A549 (cell line): ENCODE measurements at regions of chr12 and their contacts with region 1.

Region 1: GRCh38 chr12:53098982-53099651 is 1.6 kb downstream of the IGFBP6 start:
- DNase-seq: peak; percentile 95 to 98
- ATAC-seq: peak; percentile 71 to 75
- H3K4me3 ChIP-seq: peak overlapping the region; percentile 54
- H3K27ac ChIP-seq: peak overlapping the region; percentile 92 to 95
- H3K4me1 ChIP-seq: peaks cover 50% of the 10 kb centered on the region
- CTCF ChIP-seq: peak; percentile 98
- EP300 ChIP-seq: no peak
- POLR2A ChIP-seq: peak; percentile 30
- RAD21 ChIP-seq: peak; percentile 95 to 96

Region 2: GRCh38 chr12:53079226-53080117 is 19.6 kb before region 1 on chr12 and contains the start of gene SPRYD3:
- CTCF ChIA-PET with region 1: interaction called, 1,424 read pairs
- POLR2A ChIA-PET with region 1: interaction called, 46 read pairs
- DNase-seq: peak; percentile 99 to 100
- ATAC-seq: peak; percentile 98 to 99
- H3K4me3 ChIP-seq: peak within 1 kb of the TSS; percentile 56
- H3K27ac ChIP-seq: peak within 1 kb of the TSS; percentile 86 to 94
- H3K4me1 ChIP-seq: peaks cover 10% of the 10 kb centered on the region; the same call in 2 of the 3 replicates
- CTCF ChIP-seq: no peak
- EP300 ChIP-seq: no peak
- POLR2A ChIP-seq: peak; percentile 99
- RAD21 ChIP-seq: no peak
- polyA plus RNA-seq, gene SPRYD3: 26.8 and 28.1 TPM in 2 replicates

Region 3: GRCh38 chr12:53115112-53115890 is 16.2 kb after region 1 on chr12:
- CTCF ChIA-PET with region 1: interaction called, 24 read pairs
- POLR2A ChIA-PET with region 1: no interaction called
- DNase-seq: no peak
- ATAC-seq: peak in 1 of 2 experiments; percentile 16; a peak in 2 of 6 replicates
- H3K4me3 ChIP-seq: no peak overlapping the region
- H3K27ac ChIP-seq: no peak overlapping the region
- H3K4me1 ChIP-seq: no peaks in the 10 kb centered on the region
- CTCF ChIP-seq: no peak
- EP300 ChIP-seq: no peak
- POLR2A ChIP-seq: no peak
- RAD21 ChIP-seq: no peak

Region 4: GRCh38 chr12:53129170-53129569 is 30.1 kb after region 1 on chr12:
- CTCF ChIA-PET with region 1: interaction called, 11 read pairs
- POLR2A ChIA-PET with region 1: no interaction called
- DNase-seq: no peak
- ATAC-seq: peak; percentile 39 to 50; a peak in 4 of 6 replicates
- H3K4me3 ChIP-seq: no peak overlapping the region
- H3K27ac ChIP-seq: no peak overlapping the region
- H3K4me1 ChIP-seq: no peaks in the 10 kb centered on the region
- CTCF ChIP-seq: no peak
- EP300 ChIP-seq: no peak
- POLR2A ChIP-seq: no peak
- RAD21 ChIP-seq: no peak

Region 5: DNA sequence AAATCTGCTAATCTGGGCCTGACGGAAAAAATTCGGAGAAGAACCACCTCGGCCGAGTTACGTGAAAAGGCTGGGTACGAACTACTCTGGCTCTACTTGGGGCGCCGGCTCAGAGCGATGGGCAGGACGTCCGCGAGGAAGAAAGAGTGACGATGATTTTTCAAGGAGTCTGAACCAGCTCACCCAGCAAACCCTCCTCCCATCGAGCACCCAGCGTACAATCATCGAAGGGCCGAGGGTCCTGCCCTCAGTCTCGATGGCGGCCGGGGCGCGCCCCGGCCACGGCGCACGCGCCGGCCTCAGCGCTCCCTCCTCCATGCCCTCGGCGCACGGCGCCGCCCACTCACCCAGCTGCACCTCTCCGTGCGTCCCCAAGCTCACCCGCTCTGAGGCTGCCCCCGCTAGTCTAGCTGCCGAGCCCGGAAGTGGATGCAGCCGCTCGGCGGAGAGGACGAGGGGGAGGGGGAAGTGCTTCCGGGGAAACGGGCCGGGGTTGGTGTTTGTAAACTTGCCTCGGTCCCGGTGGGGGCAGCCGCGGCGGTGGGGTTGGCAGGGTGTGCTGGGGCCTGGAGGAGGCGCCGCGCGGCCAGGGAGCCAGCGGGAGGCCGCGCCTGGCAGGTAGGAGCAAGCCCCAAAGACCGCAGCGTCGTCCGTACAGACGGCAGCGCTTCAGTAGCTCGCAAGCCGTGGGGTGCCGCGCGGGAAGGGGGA is 81.3 kb after region 1 on chr12 and contains the starts of genes CSAD and ZNF740:
- CTCF ChIA-PET with region 1: interaction called, 5 read pairs
- POLR2A ChIA-PET with region 1: interaction called, 11 read pairs
- DNase-seq: peak; percentile 98 to 99
- ATAC-seq: peak; percentile 97 to 98
- H3K4me3 ChIP-seq: peak within 1 kb of the TSS; percentile 76
- H3K27ac ChIP-seq: peak within 1 kb of the TSS; percentile 92 to 93
- H3K4me1 ChIP-seq: peaks cover 39% of the 10 kb centered on the region
- CTCF ChIP-seq: no peak
- EP300 ChIP-seq: no peak; a peak in 1 of 5 replicates
- POLR2A ChIP-seq: peak; percentile 90
- RAD21 ChIP-seq: 0 out of 5 replicates have a peak, but pooled peaks of 1 of the 2 experiments have one; percentile 14
- polyA plus RNA-seq, gene CSAD: 16.5 and 19.2 TPM in 2 replicates
- polyA plus RNA-seq, gene ZNF740: 28.8 and 32.9 TPM in 2 replicates

Region 6: DNA sequence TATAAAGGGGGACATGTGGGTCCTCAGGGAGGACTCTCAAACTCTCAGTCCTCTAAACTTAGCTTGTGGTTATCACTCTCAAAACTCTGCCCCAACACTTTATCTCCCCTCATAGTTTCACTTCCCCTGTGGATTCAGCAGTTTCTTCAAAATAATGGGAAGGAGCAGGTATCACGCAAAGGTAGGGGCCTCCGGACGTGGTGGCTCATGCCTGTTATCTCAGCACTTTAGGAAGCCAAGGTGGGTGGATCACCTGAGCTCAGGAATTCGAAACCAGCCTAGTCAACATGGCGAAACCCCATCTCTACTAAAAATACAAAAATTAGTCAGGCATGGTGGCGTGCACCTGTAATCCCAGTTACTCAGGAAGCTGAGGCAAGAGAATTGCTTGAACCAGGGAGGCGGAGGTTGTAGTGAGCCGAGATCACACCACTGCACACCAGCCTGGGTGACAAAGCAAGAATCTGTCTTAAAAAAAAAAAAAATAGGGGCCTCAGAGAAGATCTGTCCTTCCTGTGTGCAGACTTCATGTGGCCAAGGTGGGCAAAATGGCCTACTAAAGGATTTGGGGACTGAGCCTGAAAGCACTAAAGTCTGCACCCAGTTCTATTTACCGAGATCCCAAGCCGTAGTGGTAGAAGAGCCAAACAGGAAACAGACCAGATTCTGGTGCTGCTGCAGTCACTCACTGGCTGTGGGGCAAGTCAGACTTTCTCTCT is 101.5 kb after region 1 on chr12:
- CTCF ChIA-PET with region 1: interaction called, 32 read pairs
- POLR2A ChIA-PET with region 1: no interaction called
- DNase-seq: no peak
- ATAC-seq: no peak
- H3K4me3 ChIP-seq: no peak overlapping the region
- H3K27ac ChIP-seq: no peak overlapping the region
- H3K4me1 ChIP-seq: peaks cover 21% of the 10 kb centered on the region
- CTCF ChIP-seq: no peak
- EP300 ChIP-seq: no peak
- POLR2A ChIP-seq: no peak
- RAD21 ChIP-seq: no peak